B cell (primary cell): ENCODE measurements at regions of chr16 and their contacts with region 1.

Region 1: DNA sequence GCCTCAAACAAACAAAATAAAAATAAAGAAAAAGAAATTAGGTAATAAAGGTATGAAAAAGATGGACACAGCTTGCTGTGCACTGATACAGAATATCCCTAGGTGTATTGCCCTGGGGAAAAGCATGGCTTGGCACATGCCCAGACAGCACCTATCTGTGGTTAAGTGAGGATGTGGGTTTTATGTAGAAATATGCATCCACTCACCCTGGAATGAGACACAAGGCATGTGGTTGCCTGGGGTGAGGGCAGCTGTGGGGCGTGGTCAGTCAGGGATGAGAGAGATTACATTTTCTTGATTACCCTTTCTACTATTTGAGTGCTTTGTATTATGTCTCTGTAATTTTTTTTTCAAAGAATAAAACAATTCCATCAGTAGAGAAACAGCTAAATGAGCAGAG is 6.9 kb downstream of the PLLP start:
- DNase-seq: no peak
- ATAC-seq: peak; percentile 17
- H3K4me3 ChIP-seq: no peak overlapping the region
- H3K4me3 Mint-ChIP-seq: no peak overlapping the region
- H3K27ac ChIP-seq: no peak overlapping the region
- H3K27ac Mint-ChIP-seq: no peak overlapping the region
- H3K4me1 ChIP-seq: peaks cover 0 to 2% of the 10 kb centered on the region in 2 donors
- H3K4me1 Mint-ChIP-seq: peaks cover 8% of the 10 kb centered on the region
- H3K27me3 ChIP-seq: peaks cover 0 to 6% (median 2%) of the 10 kb centered on the region in 4 experiments
- H3K27me3 Mint-ChIP-seq: peaks cover 13% of the 10 kb centered on the region
- CTCF ChIP-seq: no peak

Region 2: DNA sequence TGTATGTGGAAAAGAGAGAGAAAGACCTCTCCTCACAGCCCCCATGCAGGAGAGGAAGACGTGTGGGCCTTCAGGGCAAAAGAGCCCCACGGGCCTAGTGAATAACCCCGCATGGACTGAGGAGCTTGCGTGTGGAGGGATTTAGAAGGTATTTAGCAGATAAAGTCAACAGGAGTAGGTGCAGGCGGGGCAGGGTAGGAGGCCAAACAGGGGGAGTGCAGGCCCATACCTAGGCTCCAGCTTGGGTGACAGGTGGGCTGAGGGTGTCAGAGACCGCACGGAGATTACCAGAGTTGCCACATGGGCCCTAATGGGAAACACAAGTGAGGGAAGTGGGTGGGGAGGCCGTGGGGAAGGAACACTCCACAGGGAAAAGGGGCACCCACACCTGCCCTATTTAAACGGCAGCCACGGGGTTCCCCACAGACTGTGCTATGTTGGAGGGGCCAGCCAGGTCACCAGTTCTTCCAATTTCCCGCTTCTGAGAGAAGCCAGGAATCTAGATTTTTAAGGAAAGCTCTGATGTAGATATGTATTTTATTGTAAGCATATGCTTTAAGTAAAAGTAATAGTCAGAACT is 701.5 kb after region 1 on chr16:
- CTCF ChIA-PET with region 1: no interaction called
- POLR2A ChIA-PET with region 1: interaction called, 10 read pairs
- intact Hi-C with region 1: no loop called
- DNase-seq: no peak
- ATAC-seq: no peak
- H3K4me3 ChIP-seq: no peak overlapping the region
- H3K4me3 Mint-ChIP-seq: no peak overlapping the region
- H3K27ac ChIP-seq: no peak overlapping the region
- H3K27ac Mint-ChIP-seq: no peak overlapping the region
- H3K4me1 ChIP-seq: peaks cover 2 to 3% of the 10 kb centered on the region in 2 donors
- H3K4me1 Mint-ChIP-seq: peaks cover 2% of the 10 kb centered on the region
- H3K27me3 ChIP-seq: peaks cover 0 to 6% (median 3%) of the 10 kb centered on the region in 4 experiments
- H3K27me3 Mint-ChIP-seq: peaks cover 21% of the 10 kb centered on the region
- CTCF ChIP-seq: no peak